IMR-90 (cell line): ENCODE measurements at regions of chr1 and their contacts with region 1.

Region 1: DNA sequence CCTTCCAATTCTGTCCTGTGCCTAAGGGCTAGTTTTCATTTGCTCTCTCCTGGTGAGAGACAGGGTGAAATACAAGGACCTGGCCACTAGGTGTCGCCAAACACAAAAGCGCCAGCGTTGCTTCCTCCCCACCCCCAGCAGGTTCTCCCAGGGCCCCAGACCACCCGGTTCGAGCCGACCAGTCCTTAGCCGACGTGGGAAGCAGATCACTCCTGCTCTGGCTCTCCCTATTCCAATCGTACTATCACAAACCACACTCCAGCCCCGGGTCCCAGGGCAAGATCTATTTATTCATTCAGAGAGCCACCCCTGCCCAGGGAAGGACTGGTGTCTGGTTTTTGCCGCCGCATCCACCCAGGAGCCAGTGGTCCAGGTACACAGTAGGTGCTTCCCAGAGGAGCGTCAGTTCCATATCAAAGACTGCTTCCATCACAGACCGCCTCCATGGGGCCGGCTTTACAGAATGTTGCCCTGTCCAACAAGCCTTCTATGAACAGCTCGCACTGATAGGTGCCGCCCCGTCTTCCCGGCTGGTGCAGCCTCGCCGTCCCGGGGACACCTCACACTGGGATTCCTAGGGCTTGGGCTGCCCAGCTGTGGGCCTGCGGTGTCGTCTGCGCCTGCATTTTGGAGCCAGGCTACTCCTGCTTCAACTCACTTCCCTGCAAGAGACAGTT is 35.0 kb downstream of the CTNNBIP1 start:
- DNase-seq: peak; percentile 67
- ATAC-seq: peak; percentile 98
- H3K4me3 ChIP-seq: no peak overlapping the region
- H3K27ac ChIP-seq: no peak overlapping the region
- H3K4me1 ChIP-seq: peaks cover 5% of the 10 kb centered on the region
- H3K27me3 ChIP-seq: no peaks in the 10 kb centered on the region
- CTCF ChIP-seq: peak; percentile 97
- POLR2A ChIP-seq: no peak
- RAD21 ChIP-seq: peak; percentile 96

Region 2: DNA sequence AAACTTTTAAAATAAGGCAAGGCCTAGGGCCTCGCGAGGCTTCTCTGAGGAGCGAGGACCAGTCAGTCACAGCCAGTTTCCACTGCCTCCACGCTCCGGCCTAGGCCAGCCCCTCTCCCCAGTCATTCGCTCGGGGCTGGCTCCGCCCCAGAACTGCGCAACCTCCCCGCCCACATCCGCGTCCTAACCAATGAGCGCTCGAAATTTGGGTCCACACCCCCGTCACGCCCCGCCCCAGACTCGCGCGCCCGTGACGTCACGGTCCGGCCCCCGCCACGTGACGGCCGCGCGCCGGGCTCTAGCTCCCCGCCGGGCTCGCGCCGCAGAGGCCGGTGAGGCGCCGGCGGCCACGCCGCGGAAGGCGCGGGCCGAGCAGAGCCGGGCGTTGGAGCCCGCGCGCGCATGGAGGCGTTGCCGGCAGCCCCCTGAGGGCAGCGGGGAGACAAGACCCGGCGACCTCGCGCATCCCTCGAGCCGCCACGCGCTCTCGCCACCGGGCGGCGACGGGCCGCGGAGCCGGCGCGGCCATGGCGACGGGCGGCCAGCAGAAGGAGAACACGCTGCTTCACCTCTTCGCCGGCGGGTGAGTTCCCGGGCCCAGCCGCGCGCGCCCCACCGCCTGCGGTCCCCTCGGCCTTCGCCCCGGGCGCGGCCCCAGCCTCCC is 335.8 kb before region 1 on chr1 and contains the start of gene SLC25A33:
- CTCF ChIA-PET with region 1: no interaction called
- POLR2A ChIA-PET with region 1: no interaction called
- dilution Hi-C with region 1: no loop called
- in situ Hi-C with region 1: no loop called
- intact Hi-C with region 1: no loop called
- DNase-seq: peak; percentile 97
- ATAC-seq: peak; percentile 98
- H3K4me3 ChIP-seq: peak within 1 kb of the TSS; percentile 80
- H3K27ac ChIP-seq: peak within 1 kb of the TSS; percentile 55
- H3K4me1 ChIP-seq: 0 out of 2 replicates have a peak, but pooled peaks cover 2% of the 10 kb centered on the region
- H3K27me3 ChIP-seq: no peaks in the 10 kb centered on the region
- CTCF ChIP-seq: no peak
- POLR2A ChIP-seq: peak; percentile 96
- RAD21 ChIP-seq: no peak
- total RNA-seq, gene SLC25A33: 3.0 and 3.6 TPM in 2 replicates

Region 3: DNA sequence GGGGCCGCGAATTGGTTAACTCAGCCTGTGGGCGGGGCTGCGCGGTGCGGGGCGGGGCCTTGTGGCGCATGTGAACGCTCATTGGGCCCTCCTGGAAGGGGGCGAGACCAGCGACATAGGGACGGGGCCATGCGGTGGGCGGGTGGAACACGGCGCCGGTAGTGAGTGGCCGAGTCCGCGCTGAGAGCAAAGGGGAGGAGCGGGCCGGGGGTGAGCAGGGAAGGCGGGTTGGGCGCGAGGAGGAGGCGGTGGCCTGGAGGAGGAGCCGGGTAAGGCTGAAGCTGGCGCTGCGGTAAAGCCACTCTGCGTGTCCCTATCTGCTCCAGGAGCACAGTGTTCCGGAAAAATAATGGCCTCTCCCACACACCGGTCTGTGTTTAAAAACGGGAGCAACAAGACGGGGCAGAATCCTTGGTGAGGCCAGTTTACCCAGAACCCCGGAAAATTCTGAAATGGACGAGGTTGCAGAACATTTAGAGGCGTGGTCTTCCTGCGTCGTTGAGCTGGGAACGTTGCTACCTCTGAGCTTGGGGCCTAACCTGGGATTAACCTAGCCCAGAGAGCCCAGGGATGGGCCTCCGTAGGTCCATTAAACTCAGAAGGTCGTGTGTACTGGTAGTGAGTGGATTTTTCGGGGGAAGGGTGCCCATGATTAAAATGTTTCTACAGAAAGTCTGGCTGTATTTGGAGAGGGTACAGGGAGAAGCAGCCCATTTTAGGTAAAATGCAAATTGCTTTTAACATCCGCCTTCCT is 35.5 kb after region 1 on chr1:
- CTCF ChIA-PET with region 1: interaction called, 5 read pairs
- POLR2A ChIA-PET with region 1: no interaction called
- dilution Hi-C with region 1: no loop called
- in situ Hi-C with region 1: no loop called
- intact Hi-C with region 1: loop called (anchors 1 kb)
- DNase-seq: peak; percentile 98
- ATAC-seq: peak; percentile 97
- H3K4me3 ChIP-seq: peak overlapping the region; percentile 51
- H3K27ac ChIP-seq: peak overlapping the region; percentile 62
- H3K4me1 ChIP-seq: peaks cover 5% of the 10 kb centered on the region
- H3K27me3 ChIP-seq: no peaks in the 10 kb centered on the region
- CTCF ChIP-seq: no peak
- POLR2A ChIP-seq: peak; percentile 7; the same call in 1 of the 2 replicates
- RAD21 ChIP-seq: no peak

Region 4: DNA sequence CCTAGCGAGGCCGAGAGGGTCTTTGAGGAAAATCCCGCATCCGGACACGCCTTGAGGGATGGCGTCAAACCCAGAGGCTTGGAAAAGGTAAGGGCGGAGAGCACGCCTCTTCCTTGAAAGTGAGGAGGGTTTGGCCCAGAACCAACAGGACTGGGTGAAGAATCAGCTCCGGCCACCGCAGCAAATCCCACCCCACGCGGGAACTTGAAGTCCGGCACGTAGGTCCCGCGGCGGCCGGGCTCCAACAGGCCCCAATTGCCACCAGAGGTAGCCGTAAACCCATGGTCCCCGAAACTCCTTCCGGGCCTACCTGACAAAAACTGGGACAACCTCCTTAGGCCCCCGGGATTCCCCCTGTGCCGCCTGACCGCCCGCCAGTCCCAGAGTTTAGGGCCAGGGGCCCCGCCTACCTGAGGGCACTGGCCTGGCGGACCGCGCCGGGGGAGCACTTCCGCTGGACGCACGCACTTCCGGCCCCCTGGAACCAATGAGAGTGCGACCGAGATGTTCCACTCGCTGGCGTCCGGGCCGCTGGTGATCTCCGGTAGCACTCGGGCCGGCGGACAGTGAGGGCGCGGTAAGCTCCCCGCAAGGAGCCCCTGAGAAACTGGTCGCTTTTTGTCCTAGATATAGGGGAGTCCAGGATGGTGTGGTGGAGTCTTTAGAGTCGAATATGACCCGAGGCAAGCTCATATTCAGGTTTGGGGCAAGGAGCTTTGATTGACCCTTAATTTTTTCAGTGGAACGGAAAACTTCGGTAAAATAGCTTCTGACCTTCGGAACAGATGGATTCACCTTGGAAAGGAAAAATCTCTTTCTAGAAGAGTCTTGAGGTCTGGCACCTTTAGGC is 68.1 kb after region 1 on chr1 and contains the starts of genes LZIC and NMNAT1:
- CTCF ChIA-PET with region 1: no interaction called
- POLR2A ChIA-PET with region 1: interaction called, 3 read pairs
- dilution Hi-C with region 1: no loop called
- in situ Hi-C with region 1: loop called (anchors 5 kb)
- intact Hi-C with region 1: loop called (anchors 1 kb)
- DNase-seq: peak; percentile 93
- ATAC-seq: peak; percentile 95
- H3K4me3 ChIP-seq: peak within 1 kb of the TSS; percentile 85
- H3K27ac ChIP-seq: peak within 1 kb of the TSS; percentile 79
- H3K4me1 ChIP-seq: no peaks in the 10 kb centered on the region
- H3K27me3 ChIP-seq: no peaks in the 10 kb centered on the region
- CTCF ChIP-seq: no peak
- POLR2A ChIP-seq: peak; percentile 98
- RAD21 ChIP-seq: no peak; the same call in 1 of the 2 replicates
- total RNA-seq, gene LZIC: 19.0 and 37.2 TPM in 2 replicates
- total RNA-seq, gene NMNAT1: 11.7 and 11.9 TPM in 2 replicates

Region 5: DNA sequence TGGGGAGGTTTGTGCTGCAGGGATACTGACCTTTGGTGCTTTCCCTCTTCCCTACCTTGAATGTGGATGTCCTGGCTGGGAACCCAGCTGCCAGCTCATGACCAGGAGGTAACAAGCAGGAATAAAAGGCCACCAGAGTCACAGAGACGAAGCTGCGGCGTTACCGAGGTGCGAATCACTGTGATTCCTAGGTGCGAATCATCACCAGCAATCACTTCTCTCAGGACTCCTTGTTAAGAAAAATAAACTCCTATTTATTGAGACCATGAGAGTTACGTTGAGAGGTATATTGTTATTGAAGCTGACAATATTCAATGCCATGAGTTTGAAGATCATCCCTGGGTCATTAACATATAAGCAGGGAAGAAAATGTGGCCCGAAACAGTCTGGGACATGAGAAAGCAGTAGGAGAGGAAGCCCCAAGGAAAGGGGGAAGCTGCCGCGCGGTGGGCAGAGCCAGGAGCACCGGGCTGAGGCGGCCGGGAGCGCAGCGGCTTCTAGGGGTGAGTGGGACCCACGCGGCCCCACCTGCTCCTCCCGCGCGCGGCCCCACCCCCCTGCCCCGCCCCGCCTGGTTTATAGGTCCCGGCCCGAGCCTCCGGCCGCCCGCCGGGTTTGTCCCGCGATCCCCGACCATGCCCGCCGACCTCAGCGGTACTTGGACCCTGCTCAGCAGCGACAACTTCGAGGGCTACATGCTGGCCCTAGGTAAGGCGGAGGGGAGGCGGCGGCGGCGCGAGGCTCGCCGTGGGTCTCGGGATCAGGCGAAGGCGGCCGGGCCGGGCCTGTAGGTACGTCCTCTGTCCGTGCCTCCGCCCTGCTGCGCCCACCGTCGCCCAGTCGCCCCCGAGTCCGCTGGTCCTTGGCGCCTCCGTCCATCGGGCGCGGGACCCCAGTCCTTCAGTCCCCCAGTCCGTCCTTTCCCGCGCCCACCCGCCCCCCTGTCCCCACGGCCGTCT is 121.8 kb after region 1 on chr1 and contains the start of gene RBP7:
- CTCF ChIA-PET with region 1: no interaction called
- POLR2A ChIA-PET with region 1: no interaction called
- dilution Hi-C with region 1: no loop called
- in situ Hi-C with region 1: no loop called
- intact Hi-C with region 1: no loop called
- DNase-seq: no peak
- ATAC-seq: peak; percentile 46
- H3K4me3 ChIP-seq: peak within 1 kb of the TSS; percentile 40; the same call in 1 of the 2 replicates
- H3K27ac ChIP-seq: no peak within 1 kb of the TSS
- H3K4me1 ChIP-seq: no peaks in the 10 kb centered on the region
- H3K27me3 ChIP-seq: peaks cover 26% of the 10 kb centered on the region
- CTCF ChIP-seq: no peak
- POLR2A ChIP-seq: no peak
- RAD21 ChIP-seq: no peak
- total RNA-seq, gene RBP7: not detected in 2 replicates

Region 6: DNA sequence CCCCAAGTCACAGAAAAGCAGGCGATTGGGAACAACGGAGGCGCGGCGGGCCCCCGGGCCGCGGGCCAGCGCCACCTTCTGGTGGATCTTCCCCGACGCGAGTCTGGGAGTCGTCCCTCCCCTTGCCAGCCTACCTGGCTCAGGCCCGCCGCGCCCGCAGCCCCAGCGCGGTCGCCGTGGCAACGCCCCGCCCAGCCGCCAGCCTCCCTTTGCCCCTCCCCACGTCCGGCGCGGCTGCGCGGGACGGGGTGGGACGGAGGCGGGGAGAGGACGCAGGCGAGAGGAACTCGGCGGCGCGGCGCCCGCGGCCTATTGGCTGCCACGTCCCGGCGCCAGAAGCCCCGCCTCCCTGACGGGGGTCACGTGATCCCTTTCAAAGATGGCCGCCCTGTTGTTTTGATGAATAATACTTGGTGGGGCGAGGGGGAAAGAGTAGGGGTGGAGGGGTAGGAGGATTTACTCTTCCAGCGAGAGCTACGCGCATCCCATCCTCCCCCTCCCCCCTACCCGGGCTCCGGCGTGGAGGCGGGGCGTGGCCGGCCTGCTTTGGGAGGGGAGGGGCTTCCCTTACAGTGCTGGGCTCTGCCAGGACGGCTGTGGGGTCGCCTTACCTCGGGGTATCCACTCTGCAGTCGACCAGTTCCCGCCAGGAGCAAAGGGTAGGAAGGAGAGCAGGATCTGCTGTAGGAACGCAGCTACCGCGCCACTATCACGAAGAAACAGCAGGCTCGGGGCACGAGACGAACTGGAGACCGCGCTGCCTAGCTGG is 157.7 kb after region 1 on chr1 and contains the start of gene UBE4B:
- CTCF ChIA-PET with region 1: no interaction called
- POLR2A ChIA-PET with region 1: no interaction called
- dilution Hi-C with region 1: no loop called
- in situ Hi-C with region 1: no loop called
- intact Hi-C with region 1: loop called (anchors 1 kb)
- DNase-seq: peak; percentile 97
- ATAC-seq: peak; percentile 98
- H3K4me3 ChIP-seq: peak within 1 kb of the TSS; percentile 70
- H3K27ac ChIP-seq: peak within 1 kb of the TSS; percentile 84
- H3K4me1 ChIP-seq: peaks cover 6% of the 10 kb centered on the region; the same call in 1 of the 2 replicates
- H3K27me3 ChIP-seq: no peaks in the 10 kb centered on the region
- CTCF ChIP-seq: peak; percentile 87
- POLR2A ChIP-seq: no peak; the same call in 1 of the 2 replicates
- RAD21 ChIP-seq: peak; percentile 74
- total RNA-seq, gene UBE4B: 39.3 and 41.9 TPM in 2 replicates

Region 7: GRCh38 chr1:10152709-10153284 is 277.7 kb after region 1 on chr1:
- CTCF ChIA-PET with region 1: no interaction called
- POLR2A ChIA-PET with region 1: no interaction called
- dilution Hi-C with region 1: no loop called
- in situ Hi-C with region 1: no loop called
- intact Hi-C with region 1: loop called (anchors 2 kb)
- DNase-seq: peak; percentile 48
- ATAC-seq: peak; percentile 79
- H3K4me3 ChIP-seq: no peak overlapping the region
- H3K27ac ChIP-seq: no peak overlapping the region
- H3K4me1 ChIP-seq: peaks cover 3% of the 10 kb centered on the region
- H3K27me3 ChIP-seq: no peaks in the 10 kb centered on the region
- CTCF ChIP-seq: peak; percentile 69
- POLR2A ChIP-seq: no peak
- RAD21 ChIP-seq: peak; percentile 82

Region 8: GRCh38 chr1:10430216-10431069 is 555.3 kb after region 1 on chr1 and contains the start of gene CENPS:
- CTCF ChIA-PET with region 1: no interaction called
- POLR2A ChIA-PET with region 1: no interaction called
- dilution Hi-C with region 1: no loop called
- in situ Hi-C with region 1: no loop called
- intact Hi-C with region 1: loop called (anchors 2 kb)
- DNase-seq: peak; percentile 83
- ATAC-seq: peak; percentile 95
- H3K4me3 ChIP-seq: peak within 1 kb of the TSS; percentile 76
- H3K27ac ChIP-seq: peak within 1 kb of the TSS; percentile 86
- H3K4me1 ChIP-seq: peaks cover 2% of the 10 kb centered on the region; the same call in 1 of the 2 replicates
- H3K27me3 ChIP-seq: no peaks in the 10 kb centered on the region
- CTCF ChIP-seq: peak; percentile 98
- POLR2A ChIP-seq: no peak; the same call in 1 of the 2 replicates
- RAD21 ChIP-seq: peak; percentile 66
- total RNA-seq, gene CENPS: 9.9 and 11.4 TPM in 2 replicates